Activated T-helper 1 cell treated with anti-CD3 and anti-CD28 coated beads, Interleukin-12 subunit alpha, Interleukin-12 subunit beta, Interleukin-2, Interleukin-4 antibody, amounts not matched to agents 30 ng/mL and 10 ng/mL and 1 ng/mL, durations not matched to agents 14 hours and 24 hours and 36 hours (primary cell): ENCODE measurements at regions of chr4 and their contacts with region 1.

Region 1: DNA sequence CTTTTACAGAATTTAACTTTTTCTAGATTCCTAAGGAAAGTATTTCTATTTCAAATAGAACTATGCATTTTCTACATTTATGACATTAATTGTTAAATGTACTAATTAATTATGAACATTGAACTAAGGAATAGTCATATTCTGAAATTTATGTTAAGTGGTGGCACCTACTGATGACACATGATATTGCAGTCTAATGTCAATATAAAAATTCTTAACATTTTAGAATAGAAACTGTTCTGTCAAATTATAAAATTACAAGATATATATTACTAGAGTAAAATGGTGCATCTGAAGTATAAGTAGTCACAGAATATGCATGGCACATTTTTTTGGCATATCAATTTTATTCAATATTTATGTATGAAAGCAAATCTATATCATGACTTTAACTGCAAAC is 40.2 kb upstream of the NDNF start:
- DNase-seq: no peak
- H3K4me3 Mint-ChIP-seq: no peak overlapping the region
- H3K27ac Mint-ChIP-seq: no peak overlapping the region
- H3K4me1 Mint-ChIP-seq: peaks cover 21% of the 10 kb centered on the region
- H3K27me3 Mint-ChIP-seq: peaks cover 11% of the 10 kb centered on the region

Region 2: DNA sequence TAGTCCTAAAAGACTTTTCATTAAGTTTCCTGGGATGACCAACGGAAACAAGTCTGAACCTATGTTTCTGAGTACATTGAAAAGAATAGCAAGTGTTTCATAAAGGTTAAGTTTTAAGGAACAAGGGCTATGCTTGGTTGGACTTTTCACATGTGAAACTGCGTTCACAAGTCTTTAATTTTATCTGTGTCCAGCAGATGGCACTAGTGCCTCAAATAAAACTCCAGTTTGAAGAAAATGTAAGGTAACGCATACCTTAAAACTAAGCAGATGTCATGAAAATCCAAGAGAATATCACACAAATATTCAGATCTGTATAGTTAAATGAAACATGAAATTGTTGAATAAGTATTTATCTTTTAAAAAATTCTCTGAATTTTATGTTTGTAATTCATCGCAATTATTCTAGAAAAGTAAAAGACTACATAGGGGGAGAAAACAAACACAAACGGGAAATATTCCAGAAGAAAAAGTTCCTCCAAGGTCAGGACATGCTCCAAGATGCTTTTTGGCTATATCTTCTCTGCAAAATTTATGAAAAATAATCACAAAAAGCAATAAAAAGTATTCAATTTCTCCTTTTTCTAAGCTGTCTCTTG is 956.3 kb before region 1 on chr4:
- intact Hi-C with region 1: loop called (anchors 5 kb)
- DNase-seq: no peak
- H3K4me3 Mint-ChIP-seq: no peak overlapping the region
- H3K27ac Mint-ChIP-seq: no peak overlapping the region
- H3K4me1 Mint-ChIP-seq: no peaks in the 10 kb centered on the region
- H3K27me3 Mint-ChIP-seq: peaks cover 7% of the 10 kb centered on the region

Region 3: GRCh38 chr4:120557372-120557771 is 555.2 kb before region 1 on chr4:
- intact Hi-C with region 1: no loop called
- DNase-seq: no peak
- H3K4me3 Mint-ChIP-seq: no peak overlapping the region
- H3K27ac Mint-ChIP-seq: no peak overlapping the region
- H3K4me1 Mint-ChIP-seq: no peaks in the 10 kb centered on the region
- H3K27me3 Mint-ChIP-seq: no peaks in the 10 kb centered on the region

Region 4: GRCh38 chr4:121072224-121073003 is 40.1 kb before region 1 on chr4 and contains the start of gene NDNF:
- intact Hi-C with region 1: loop called (anchors 2 kb)
- DNase-seq: peak; percentile 34
- H3K4me3 Mint-ChIP-seq: peak within 1 kb of the TSS; percentile 82
- H3K27ac Mint-ChIP-seq: peak within 1 kb of the TSS; percentile 59
- H3K4me1 Mint-ChIP-seq: peaks cover 20% of the 10 kb centered on the region
- H3K27me3 Mint-ChIP-seq: peaks cover 83% of the 10 kb centered on the region
- total RNA-seq, gene NDNF: 0.39 TPM in 1 of 2 replicates, not detected in the other

Region 5: DNA sequence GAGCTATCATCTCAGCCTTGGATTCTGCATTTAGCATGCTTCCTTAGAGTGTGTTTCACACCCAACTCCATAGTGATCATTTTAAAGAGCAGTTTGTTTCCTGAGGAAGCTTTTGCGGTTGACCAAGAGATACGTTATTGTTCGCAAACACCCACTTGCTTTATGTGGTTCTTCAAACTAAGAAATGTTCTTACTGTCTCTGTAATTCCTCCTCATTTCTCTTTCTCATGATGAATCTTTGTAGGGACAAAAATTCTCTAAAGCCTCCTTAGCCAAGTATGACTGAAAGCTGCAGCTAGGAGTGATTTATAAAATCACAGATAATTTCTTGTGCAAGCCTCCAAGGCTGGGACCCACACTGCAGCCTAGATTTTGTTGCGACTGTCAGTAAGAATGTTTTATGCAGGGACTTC is 41.6 kb after region 1 on chr4:
- intact Hi-C with region 1: loop called (anchors 1 kb)
- DNase-seq: peak; percentile 39
- H3K4me3 Mint-ChIP-seq: peak overlapping the region; percentile 56
- H3K27ac Mint-ChIP-seq: peak overlapping the region; percentile 73
- H3K4me1 Mint-ChIP-seq: peaks cover 74% of the 10 kb centered on the region
- H3K27me3 Mint-ChIP-seq: peaks cover 9% of the 10 kb centered on the region

Region 6: GRCh38 chr4:121252224-121252806 is 139.8 kb after region 1 on chr4:
- intact Hi-C with region 1: loop called (anchors 1 kb)
- DNase-seq: peak; percentile 21
- H3K4me3 Mint-ChIP-seq: no peak overlapping the region
- H3K27ac Mint-ChIP-seq: no peak overlapping the region
- H3K4me1 Mint-ChIP-seq: peaks cover 66% of the 10 kb centered on the region
- H3K27me3 Mint-ChIP-seq: peaks cover 6% of the 10 kb centered on the region

Region 7: DNA sequence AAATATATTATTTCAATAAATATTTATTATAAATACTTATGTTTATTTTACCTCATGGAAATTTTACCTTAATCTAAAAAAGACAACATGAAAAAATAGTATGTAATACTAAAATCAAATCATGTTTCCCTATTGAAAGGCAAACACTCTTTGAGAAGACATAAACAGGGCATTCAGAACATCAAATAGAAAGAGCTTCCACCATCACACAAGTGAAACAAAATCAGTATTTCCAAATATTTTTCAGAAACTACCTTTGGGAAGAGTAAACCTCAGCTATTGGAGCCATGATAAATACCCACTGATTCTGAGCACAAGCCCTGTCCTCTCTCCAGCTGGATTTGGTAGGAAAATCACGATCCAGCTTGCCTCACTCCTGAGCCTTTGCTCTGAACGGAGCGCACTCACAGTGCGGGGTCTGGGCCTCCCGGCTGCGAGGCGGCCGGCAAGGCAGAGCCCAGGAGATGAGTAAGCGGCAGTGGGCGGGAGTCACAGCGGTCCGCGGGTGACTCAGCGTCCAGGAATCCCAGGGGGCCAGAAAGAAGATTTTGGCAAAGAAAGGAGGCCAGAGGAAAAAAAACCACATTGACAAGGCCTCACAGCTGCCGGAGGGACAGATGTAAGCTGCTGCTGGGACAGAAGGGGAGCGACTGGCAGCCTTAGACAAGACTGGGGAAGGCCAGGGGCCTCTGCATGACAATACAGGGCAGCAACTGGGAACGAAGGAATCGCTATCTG is 598.9 kb after region 1 on chr4:
- intact Hi-C with region 1: loop called (anchors 5 kb)
- DNase-seq: peak; percentile 10
- H3K4me3 Mint-ChIP-seq: peak overlapping the region; percentile 45
- H3K27ac Mint-ChIP-seq: no peak overlapping the region
- H3K4me1 Mint-ChIP-seq: peaks cover 51% of the 10 kb centered on the region
- H3K27me3 Mint-ChIP-seq: peaks cover 24% of the 10 kb centered on the region